ENCODE measurements at regions of chr13 and their contacts with region 1.

Region 1: DNA sequence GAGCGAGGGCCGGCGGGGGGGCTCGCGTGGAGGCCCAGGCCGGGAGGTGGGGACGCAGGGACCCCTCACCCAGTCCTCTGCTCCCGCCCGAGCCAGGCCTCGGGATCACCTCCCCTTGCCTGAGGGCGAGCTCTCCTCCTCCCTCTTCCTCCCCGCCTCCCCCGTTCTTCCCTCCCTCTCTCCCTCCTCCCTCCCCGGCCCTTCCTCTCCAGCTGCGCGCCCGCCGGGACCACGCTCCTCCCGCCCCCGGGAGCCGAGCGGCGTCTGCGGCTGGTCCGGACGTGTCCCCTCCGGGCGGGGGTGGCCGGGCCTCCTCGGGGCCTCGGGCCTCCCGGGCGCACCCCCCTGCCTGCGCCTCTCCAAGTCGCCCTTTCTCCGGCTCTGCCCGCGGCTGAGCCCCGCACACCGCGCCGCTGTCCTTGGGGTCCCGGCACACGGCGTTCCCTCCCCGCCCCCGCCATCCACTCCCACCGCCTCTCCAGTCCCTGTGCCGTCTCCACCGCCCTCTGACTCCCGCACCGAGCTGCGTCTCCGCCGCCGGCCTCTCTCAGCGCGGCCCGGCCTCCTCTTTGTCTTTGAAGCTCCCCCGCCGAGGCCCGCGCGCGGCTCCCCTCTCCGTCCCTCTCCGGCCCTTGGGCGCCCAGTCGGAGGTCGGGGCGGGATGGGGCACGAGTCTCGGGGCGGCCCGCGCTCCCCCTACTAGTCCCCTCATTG is 5.7 kb downstream of the SOX1 start:
- DNase-seq: no peak
- H3K4me3 Mint-ChIP-seq: no peak overlapping the region
- H3K27ac Mint-ChIP-seq: no peak overlapping the region
- H3K4me1 Mint-ChIP-seq: peaks cover 10% of the 10 kb centered on the region
- H3K27me3 Mint-ChIP-seq: peaks cover 62% of the 10 kb centered on the region

Region 2: DNA sequence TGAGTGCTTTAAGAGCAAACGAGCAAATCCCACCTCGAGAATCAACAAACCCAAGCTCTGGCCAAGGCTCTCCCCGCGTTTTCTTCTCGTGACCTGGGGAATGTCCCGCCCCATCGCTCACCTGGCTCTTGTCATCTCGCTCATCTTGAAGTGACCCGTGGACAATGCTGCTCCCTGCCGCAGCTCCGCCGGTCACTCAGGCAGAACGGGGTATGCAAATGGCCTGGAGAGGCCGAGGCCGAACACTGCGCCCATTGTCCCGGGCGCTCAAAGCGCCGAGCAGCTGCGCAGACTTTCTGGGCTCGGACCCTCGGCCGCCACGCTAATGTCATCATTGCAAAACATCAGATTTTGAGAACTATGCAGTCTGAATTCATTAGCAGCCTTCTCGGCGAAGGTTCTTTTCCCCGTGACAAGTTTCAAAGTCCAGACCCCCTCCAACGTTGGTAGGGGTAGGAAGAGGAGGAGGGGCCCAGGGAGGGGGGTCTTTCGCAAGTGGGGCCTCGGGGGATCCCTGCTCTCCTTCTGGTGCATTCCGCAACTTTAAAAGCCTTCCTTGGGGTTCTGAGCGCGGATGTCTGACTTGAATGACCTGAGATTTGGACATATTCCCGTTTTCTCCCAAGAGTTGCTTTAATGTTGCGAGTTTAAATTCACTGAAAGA is 33.9 kb after region 1 on chr13:
- CTCF ChIA-PET with region 1: no interaction called
- intact Hi-C with region 1: loop called (anchors 5 kb)
- DNase-seq: no peak
- H3K4me3 Mint-ChIP-seq: no peak overlapping the region
- H3K27ac Mint-ChIP-seq: no peak overlapping the region
- H3K4me1 Mint-ChIP-seq: no peaks in the 10 kb centered on the region
- H3K27me3 Mint-ChIP-seq: peaks cover 52% of the 10 kb centered on the region